Activated CD4-positive, alpha-beta memory T cell treated with anti-CD3 and anti-CD28 coated beads, Interleukin-2, amount 10 ng/mL, durations not matched to agents 7 days and 5 days (primary cell): ENCODE measurements at regions of chr2 and their contacts with region 1.

Region 1: DNA sequence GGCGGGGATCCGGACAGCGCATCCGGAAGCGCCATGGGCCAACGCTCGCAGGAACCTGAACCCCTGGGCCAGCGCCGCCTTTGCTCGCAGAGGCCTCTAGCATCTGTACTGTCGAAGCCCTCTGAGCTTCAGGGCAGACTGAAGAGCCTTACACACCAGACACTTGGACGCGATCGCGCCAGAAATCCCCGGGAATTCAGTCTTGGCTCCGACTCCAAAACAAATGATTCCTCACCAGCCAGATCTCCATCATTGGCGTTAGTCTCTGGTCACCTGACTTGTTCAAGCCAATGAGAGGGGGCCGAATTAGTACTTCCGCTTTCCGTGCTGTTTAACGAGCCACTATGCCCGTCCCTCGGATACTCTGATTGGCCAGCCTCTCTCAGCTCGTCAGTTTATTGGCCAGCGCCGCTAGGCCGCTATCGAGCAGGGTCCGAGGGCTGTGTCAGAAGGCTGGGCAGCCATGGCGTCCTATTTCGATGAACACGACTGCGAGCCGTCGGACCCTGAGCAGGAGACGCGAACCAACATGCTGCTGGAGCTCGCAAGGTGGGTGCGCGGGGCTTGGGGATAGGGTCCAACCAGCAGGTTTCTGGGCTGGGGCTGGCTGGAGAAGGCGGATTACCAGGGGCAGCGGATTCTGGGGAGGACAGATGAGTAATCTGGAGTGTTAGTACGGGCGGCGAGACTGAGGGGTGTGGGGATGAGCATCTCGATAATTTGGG is at the start of gene RNF181:
- DNase-seq: peak; percentile 94
- H3K4me3 Mint-ChIP-seq: peak within 1 kb of the TSS; percentile 96
- H3K27ac Mint-ChIP-seq: peak within 1 kb of the TSS; percentile 90
- H3K4me1 Mint-ChIP-seq: peaks cover 32% of the 10 kb centered on the region
- H3K27me3 Mint-ChIP-seq: no peaks in the 10 kb centered on the region
- total RNA-seq, gene RNF181: 117 to 121 TPM

Region 2: DNA sequence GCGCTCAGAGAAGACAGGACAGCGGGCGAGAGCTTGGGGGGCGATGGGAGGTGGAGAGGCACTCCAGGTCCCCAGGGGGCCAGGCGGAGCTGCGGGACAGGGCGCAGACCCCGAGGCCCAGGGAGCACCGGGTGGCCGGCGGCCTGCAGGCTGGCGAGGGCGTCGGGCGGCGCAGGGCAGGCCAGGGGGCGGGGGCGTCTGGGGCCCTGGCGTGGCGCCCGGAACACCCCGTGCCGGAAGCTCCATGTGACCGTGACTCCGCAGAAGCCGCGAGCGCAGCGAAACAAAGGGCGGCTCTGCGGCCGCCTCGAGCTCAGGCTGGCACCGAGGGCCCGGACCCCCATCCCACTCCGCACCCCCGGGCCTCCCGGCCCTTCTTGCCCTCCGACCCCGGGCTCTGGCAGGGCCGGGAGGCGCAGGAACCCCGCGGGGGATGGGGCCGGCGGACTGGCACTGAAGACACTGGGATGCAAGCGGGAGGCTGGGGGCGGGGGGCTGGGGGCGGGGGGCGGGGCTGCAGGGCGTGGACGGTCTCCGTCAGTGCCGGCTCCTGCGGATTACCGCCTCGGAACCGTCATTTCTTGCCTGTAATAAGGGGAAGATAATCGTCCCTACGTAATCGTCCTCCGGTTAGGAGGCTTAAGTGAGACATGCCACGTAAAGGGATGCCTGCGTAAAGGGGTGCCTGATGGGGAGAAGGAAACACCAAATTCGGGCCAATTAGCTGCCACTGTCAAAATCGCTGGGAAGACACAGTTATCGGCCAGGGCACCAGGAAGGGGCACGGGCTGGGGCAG is 157.8 kb before region 1 on chr2:
- CTCF ChIA-PET with region 1: no interaction called
- POLR2A ChIA-PET with region 1: interaction called, 10 read pairs
- DNase-seq: peak; percentile 81
- H3K4me3 Mint-ChIP-seq: peak overlapping the region; percentile 77
- H3K27ac Mint-ChIP-seq: peak overlapping the region; percentile 89
- H3K4me1 Mint-ChIP-seq: peaks cover 40% of the 10 kb centered on the region
- H3K27me3 Mint-ChIP-seq: no peaks in the 10 kb centered on the region

Region 3: DNA sequence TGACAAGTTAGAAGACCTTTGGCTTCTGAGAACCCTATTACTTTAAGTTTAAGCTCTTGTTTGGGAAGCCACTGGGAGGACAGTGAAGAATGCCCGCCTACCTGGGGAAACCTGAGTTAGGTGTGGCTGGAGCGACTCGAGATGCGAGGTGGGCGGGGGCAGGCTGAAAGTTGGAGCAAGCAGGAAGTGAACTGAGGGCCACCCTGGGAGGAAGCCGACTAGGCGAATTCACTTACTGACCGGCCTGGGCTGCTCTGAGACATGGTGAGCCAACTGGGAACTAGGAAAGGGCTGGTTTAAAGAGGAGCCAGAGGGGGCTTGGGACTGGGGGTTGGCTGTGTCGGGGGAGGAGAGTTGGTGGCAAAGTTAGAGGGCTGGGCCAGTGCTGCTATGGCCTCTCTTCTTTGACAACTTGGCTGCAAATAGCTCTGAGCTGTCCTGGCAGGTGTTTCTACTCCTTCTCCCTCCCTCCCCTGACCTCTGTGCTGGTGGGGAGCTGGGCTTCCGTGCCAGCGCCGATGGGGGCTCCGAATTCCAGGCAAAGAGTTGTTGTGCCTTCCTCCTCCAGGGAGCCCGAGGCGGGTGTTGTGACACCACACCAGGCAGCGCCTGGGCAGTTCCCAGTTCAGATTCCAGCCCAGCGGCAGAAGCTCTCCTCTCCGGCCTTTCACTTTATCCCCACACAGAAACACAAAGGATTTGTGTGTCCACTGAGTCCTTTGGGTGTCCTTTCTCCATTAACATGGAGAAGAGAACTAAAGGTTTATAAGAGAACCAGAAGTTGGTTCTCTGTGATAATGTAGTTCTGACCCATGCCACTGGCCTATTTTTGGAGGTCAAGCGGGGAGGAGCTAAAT is 17.8 kb before region 1 on chr2 and contains the start of gene VAMP8:
- CTCF ChIA-PET with region 1: no interaction called
- POLR2A ChIA-PET with region 1: interaction called, 38 read pairs
- DNase-seq: peak; percentile 71
- H3K4me3 Mint-ChIP-seq: peak within 1 kb of the TSS; percentile 97
- H3K27ac Mint-ChIP-seq: peak within 1 kb of the TSS; percentile 68
- H3K4me1 Mint-ChIP-seq: peaks cover 37% of the 10 kb centered on the region
- H3K27me3 Mint-ChIP-seq: peaks cover 2% of the 10 kb centered on the region
- total RNA-seq, gene VAMP8: 132 to 133 TPM

Region 4: DNA sequence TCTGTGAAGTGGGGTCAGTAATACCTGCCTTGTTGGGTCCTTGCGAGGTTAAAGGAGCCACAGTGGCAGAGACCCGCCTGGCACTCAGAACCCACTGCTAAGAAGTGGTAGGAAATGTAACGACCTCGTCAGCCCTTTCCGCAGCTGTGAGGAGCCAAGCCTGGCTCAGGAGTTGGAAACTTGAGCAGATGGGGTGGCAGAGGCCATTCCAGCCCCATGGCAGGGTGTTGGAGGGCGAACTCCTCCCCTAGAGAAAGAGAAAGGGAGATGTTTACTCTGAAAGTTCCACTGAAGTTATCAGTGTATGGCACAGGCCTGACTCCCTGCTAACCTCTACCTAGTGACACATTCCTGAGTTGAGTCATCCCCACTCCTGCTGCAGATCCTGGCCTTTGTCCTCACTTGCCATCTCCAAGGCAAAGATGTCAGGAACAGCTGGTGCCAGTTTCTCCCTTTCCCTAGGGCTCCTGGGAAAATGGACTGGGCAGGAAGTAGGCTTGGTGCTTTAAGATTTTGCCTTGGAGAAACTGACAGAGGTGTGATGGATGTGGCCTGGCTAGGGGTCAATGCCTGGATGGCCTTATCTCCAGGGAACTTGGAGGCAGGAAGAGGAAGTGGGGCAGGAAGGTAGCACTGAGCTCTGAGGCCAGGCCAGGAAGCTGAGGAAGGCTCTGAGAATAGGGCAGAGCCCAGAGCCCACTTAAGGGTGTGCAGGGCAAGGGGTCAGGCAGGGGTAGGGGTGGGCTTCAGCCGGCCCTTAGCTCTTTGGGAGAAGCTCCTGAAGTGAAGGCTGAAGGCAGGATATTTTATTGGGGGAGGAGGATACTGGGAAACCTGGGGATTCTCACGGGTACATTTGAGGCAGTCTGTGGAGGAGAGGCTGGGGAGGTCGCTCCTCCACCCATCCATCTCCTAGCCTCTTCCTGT is 10.3 kb before region 1 on chr2:
- CTCF ChIA-PET with region 1: interaction called, 3 read pairs
- POLR2A ChIA-PET with region 1: interaction called, 40 read pairs
- DNase-seq: peak; percentile 29
- H3K4me3 Mint-ChIP-seq: peak overlapping the region; percentile 91
- H3K27ac Mint-ChIP-seq: peak overlapping the region; percentile 89
- H3K4me1 Mint-ChIP-seq: peaks cover 58% of the 10 kb centered on the region
- H3K27me3 Mint-ChIP-seq: no peaks in the 10 kb centered on the region

Region 5: GRCh38 chr2:85611705-85612587 is 16.5 kb after region 1 on chr2 and contains the start of gene C2orf68:
- CTCF ChIA-PET with region 1: interaction called, 3 read pairs
- POLR2A ChIA-PET with region 1: interaction called, 41 read pairs
- DNase-seq: peak; percentile 90
- H3K4me3 Mint-ChIP-seq: peak within 1 kb of the TSS; percentile 94
- H3K27ac Mint-ChIP-seq: peak within 1 kb of the TSS; percentile 86
- H3K4me1 Mint-ChIP-seq: peaks cover 46% of the 10 kb centered on the region
- H3K27me3 Mint-ChIP-seq: no peaks in the 10 kb centered on the region
- total RNA-seq, gene C2orf68: 48.8 to 50.9 TPM

Region 6: GRCh38 chr2:85642725-85643124 is 47.3 kb after region 1 on chr2:
- CTCF ChIA-PET with region 1: interaction called, 11 read pairs
- POLR2A ChIA-PET with region 1: interaction called, 3 read pairs
- DNase-seq: peak; percentile 41
- H3K4me3 Mint-ChIP-seq: no peak overlapping the region
- H3K27ac Mint-ChIP-seq: peak overlapping the region; percentile 88
- H3K4me1 Mint-ChIP-seq: peaks cover 28% of the 10 kb centered on the region
- H3K27me3 Mint-ChIP-seq: no peaks in the 10 kb centered on the region

Region 7: DNA sequence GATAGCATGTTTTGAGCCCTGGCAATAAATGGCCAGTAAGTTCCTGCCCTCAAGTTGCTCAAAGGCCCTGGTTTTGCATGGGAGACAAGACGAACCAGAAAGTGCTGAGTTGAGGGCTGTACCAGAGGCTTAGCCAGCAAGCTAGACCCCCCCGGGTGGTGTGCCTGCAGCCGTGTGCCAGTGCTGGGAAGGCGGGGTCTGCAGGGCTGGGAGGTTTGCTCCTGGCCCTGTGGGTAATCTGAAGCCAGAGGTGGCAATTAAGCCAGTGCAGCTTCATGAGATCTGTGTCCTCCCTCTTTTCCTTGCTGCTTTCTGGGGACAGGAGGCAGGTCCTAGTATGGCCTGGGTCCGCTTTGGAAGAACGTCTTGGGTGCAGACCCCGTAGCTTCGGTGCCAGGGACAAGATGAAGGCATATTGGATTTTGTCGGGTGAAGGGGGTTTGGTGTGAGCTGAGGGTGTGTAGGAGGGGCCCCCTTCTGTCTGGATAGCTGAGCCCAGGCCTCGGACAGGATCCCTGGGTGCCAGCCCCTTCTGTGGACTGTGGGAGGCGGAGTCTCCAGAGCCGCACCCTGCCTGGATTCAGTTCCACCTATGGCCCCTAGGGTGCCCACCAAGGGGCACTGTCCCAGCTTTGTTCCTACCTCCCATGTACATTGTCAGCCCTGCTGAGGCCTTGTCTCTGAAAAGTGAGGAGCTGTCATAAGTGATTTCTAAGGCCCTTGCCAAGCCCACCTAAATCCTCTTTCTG is 173.9 kb after region 1 on chr2:
- CTCF ChIA-PET with region 1: no interaction called
- POLR2A ChIA-PET with region 1: no interaction called
- DNase-seq: no peak
- H3K4me3 Mint-ChIP-seq: no peak overlapping the region
- H3K27ac Mint-ChIP-seq: no peak overlapping the region
- H3K4me1 Mint-ChIP-seq: peaks cover 7% of the 10 kb centered on the region
- H3K27me3 Mint-ChIP-seq: peaks cover 54% of the 10 kb centered on the region